Activated naive CD4-positive, alpha-beta T cell treated with anti-CD3 and anti-CD28 coated beads for 36 hours (primary cell): ENCODE measurements at regions of chr12 and their contacts with region 1.

Region 1: GRCh38 chr12:108562348-108563135 is at the start of gene ISCU:
- DNase-seq: peak; percentile 99
- H3K4me3 Mint-ChIP-seq: peak within 1 kb of the TSS; percentile 100
- H3K27ac Mint-ChIP-seq: peak within 1 kb of the TSS; percentile 100
- H3K4me1 Mint-ChIP-seq: peaks cover 59% of the 10 kb centered on the region
- H3K27me3 Mint-ChIP-seq: no peaks in the 10 kb centered on the region
- total RNA-seq, gene ISCU: 103 to 105 TPM

Region 2: GRCh38 chr12:107685360-107686248 is 876.9 kb before region 1 on chr12 and contains the start of gene PWP1:
- CTCF ChIA-PET with region 1: no interaction called
- intact Hi-C with region 1: loop called (anchors 2 kb)
- DNase-seq: peak; percentile 95
- H3K4me3 Mint-ChIP-seq: peak within 1 kb of the TSS; percentile 90
- H3K27ac Mint-ChIP-seq: peak within 1 kb of the TSS; percentile 95
- H3K4me1 Mint-ChIP-seq: peaks cover 20% of the 10 kb centered on the region
- H3K27me3 Mint-ChIP-seq: no peaks in the 10 kb centered on the region
- total RNA-seq, gene PWP1: 35.0 to 37.1 TPM

Region 3: DNA sequence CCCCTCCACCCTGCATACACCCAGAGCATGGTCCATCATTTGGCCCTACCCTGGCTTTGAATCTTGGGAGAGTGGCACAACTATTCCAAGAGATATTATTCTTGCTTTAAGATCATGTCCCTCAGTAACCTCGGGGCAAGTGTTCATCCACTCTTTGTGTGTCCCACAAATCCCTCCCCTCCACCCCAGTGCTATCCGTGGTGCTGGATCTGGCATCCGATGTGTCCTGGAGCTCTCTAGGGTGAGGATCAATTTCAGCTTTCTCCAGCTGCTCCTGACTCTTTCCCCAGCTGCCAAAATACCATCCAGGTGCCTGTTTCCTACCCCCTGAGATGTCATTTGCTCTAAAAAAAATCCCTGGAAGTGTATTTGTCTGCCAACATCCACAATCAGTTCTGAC is 158.6 kb before region 1 on chr12:
- CTCF ChIA-PET with region 1: no interaction called
- intact Hi-C with region 1: no loop called
- DNase-seq: no peak
- H3K4me3 Mint-ChIP-seq: no peak overlapping the region
- H3K27ac Mint-ChIP-seq: no peak overlapping the region
- H3K4me1 Mint-ChIP-seq: no peaks in the 10 kb centered on the region
- H3K27me3 Mint-ChIP-seq: peaks cover 7% of the 10 kb centered on the region

Region 4: DNA sequence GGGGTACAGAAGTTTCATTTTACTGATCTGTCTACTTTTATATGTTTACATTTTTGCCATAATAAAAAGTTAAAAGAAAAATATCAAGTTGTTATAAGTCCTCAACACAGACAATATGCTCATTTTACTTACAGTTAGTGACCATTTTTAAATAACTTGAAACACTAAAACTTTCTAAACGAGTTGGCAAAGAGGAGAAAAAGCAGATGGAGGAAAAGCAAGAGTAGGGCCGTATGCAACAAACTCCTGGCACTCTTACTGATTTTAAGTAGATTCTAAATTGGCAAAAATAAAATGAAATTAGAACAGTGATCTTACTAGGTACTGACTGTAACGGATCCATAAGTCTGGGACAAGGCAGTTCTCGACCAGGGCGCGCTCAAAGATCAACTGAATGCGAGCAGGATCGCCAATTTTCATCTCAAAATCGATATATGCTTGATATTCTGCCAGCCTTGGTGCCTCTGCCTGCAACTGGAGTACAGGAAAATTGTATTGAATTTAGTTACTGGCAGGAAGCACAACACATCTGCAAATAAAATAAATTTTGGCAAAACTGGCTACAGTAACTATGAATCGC is 23.8 kb before region 1 on chr12:
- CTCF ChIA-PET with region 1: no interaction called
- intact Hi-C with region 1: no loop called
- DNase-seq: no peak
- H3K4me3 Mint-ChIP-seq: no peak overlapping the region
- H3K27ac Mint-ChIP-seq: no peak overlapping the region
- H3K4me1 Mint-ChIP-seq: peaks cover 16% of the 10 kb centered on the region
- H3K27me3 Mint-ChIP-seq: no peaks in the 10 kb centered on the region

Region 5: DNA sequence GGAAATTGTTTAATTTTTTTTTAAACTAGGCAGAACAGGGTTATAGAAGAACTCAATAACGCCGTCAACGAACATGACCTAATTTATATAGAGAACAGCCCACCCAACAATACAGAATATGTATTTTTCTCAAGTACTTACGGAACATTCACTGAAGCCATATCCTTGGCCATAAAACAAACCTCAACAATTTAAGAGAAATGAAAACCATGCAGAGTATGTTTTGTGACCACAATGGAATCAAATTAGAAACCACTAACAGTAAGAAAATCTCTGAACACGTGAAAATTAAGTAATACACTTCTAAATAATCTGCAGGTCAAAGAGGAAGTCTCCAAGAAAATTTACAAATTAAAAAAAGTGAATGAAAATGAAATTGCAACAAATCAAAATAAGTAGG is 11.0 kb before region 1 on chr12:
- CTCF ChIA-PET with region 1: no interaction called
- intact Hi-C with region 1: loop called (anchors 1 kb)
- DNase-seq: no peak
- H3K4me3 Mint-ChIP-seq: no peak overlapping the region
- H3K27ac Mint-ChIP-seq: no peak overlapping the region
- H3K4me1 Mint-ChIP-seq: peaks cover 56% of the 10 kb centered on the region
- H3K27me3 Mint-ChIP-seq: no peaks in the 10 kb centered on the region

Region 6: GRCh38 chr12:108664338-108665258 is 102.1 kb after region 1 on chr12:
- CTCF ChIA-PET with region 1: interaction called, 5 read pairs
- intact Hi-C with region 1: loop called (anchors 2 kb)
- DNase-seq: peak; percentile 95
- H3K4me3 Mint-ChIP-seq: peak overlapping the region; percentile 41
- H3K27ac Mint-ChIP-seq: peak overlapping the region; percentile 74
- H3K4me1 Mint-ChIP-seq: peaks cover 30% of the 10 kb centered on the region
- H3K27me3 Mint-ChIP-seq: no peaks in the 10 kb centered on the region

Region 7: GRCh38 chr12:108803428-108804105 is 241.0 kb after region 1 on chr12:
- CTCF ChIA-PET with region 1: interaction called, 14 read pairs
- intact Hi-C with region 1: loop called (anchors 1 kb)
- DNase-seq: peak; percentile 83
- H3K4me3 Mint-ChIP-seq: no peak overlapping the region
- H3K27ac Mint-ChIP-seq: peak overlapping the region; percentile 76
- H3K4me1 Mint-ChIP-seq: peaks cover 7% of the 10 kb centered on the region
- H3K27me3 Mint-ChIP-seq: no peaks in the 10 kb centered on the region

Region 8: DNA sequence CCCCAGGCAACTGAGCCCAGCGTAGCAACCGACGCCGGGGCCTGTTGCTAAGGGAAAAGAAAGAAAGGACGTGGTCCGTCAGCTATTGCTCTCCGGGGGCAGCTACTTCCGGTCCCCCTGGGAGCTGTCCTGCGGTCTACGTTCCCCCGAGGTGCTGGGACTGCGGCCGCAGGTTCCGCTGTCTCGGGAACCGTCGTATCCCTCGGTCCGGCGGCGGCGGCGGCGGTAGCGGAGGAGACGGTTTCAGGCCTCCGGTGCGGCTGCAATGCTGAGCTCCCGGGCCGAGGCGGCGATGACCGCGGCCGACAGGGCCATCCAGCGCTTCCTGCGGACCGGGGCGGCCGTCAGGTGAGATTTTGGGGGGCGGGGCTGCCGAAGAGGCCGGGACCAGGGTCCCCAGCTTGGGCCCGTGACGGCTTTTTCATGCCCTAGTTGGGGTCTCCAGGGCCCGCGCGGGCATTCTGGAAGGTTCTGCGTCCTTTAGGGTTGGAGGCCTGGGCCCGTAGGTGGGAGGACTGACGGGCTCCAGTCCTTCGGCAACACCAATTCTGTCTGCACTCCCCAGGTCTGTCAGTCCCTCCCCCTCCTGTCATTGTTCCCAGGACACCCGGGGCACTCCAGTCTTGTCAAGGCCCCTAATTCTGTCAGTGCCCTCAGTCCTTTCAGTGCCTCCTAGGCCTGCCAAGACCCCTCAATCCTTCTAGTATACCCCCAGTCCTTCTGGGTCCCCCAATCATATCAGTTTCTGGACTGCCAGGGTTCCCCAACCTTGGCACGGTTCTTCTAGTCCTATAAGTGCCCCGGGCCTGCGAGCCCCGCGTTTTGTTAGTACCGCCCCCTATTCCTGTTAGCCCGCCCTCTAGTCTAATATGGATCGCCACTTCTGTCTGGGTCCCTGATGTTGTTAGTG is 490.1 kb after region 1 on chr12 and contains the start of gene USP30:
- CTCF ChIA-PET with region 1: no interaction called
- intact Hi-C with region 1: loop called (anchors 1 kb)
- DNase-seq: peak; percentile 87
- H3K4me3 Mint-ChIP-seq: peak within 1 kb of the TSS; percentile 84
- H3K27ac Mint-ChIP-seq: peak within 1 kb of the TSS; percentile 96
- H3K4me1 Mint-ChIP-seq: peaks cover 8% of the 10 kb centered on the region
- H3K27me3 Mint-ChIP-seq: no peaks in the 10 kb centered on the region
- total RNA-seq, gene USP30: 11.0 to 11.5 TPM

Region 9: GRCh38 chr12:109573029-109573913 is 1010.7 kb after region 1 on chr12 and contains the starts of genes MMAB and MVK:
- CTCF ChIA-PET with region 1: no interaction called
- intact Hi-C with region 1: loop called (anchors 5 kb)
- DNase-seq: peak; percentile 100
- H3K4me3 Mint-ChIP-seq: peak within 1 kb of the TSS; percentile 92
- H3K27ac Mint-ChIP-seq: peak within 1 kb of the TSS; percentile 90
- H3K4me1 Mint-ChIP-seq: peaks cover 23% of the 10 kb centered on the region
- H3K27me3 Mint-ChIP-seq: no peaks in the 10 kb centered on the region
- total RNA-seq, gene MMAB: 43.8 to 44.9 TPM
- total RNA-seq, gene MVK: 19.8 to 20.2 TPM